Breast epithelium (tissue), 4 donors: ENCODE measurements at regions of chr1 and their contacts with region 1.

Region 1: DNA sequence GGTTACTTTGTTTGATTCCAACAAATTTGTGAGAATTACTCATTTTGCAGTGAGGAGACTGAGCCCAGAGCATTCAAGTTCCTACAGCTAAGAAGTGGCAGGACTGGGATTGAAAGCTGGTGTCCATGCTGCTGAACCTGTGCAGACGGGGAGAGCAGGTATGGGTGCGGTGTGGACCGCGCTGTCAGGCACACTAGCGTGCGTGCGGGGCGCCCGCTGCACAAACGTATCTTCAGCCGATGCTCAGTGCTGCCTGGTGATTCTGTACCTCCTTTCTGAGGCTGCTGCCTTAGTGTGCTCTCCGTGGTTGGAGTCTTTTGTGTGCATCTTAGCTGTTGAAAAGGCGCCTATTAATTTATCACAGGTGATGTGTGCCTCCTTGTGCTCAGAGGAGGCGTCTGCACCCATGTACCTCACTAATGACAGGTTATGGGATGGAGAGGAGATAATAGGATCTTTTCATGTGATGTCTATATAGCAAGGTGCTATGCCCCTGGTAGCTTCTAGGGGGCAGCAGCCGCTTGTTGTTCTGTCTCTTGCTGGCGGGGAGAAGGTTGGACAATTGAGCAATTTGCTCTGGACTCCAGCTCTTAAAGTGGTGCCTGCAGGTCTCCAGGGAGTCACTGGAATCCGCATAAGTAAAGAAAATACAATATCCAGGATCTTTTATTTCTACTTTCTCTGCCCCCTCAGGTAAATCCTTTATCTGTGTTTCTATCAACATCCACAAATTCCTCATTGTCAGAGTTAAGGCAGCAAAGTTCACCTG is 32.5 kb downstream of the PEX14 start:
- DNase-seq: peak in 1 of 2 donors; percentile 63
- H3K4me3 ChIP-seq: no peak overlapping the region
- H3K27ac ChIP-seq: no peak overlapping the region
- H3K4me1 ChIP-seq: peaks cover 0 to 8% of the 10 kb centered on the region in 2 donors
- H3K27me3 ChIP-seq: no peaks in the 10 kb centered on the region
- CTCF ChIP-seq: peak; percentile 39 to 85 (median 82)
- POLR2A ChIP-seq: no peak

Region 2: DNA sequence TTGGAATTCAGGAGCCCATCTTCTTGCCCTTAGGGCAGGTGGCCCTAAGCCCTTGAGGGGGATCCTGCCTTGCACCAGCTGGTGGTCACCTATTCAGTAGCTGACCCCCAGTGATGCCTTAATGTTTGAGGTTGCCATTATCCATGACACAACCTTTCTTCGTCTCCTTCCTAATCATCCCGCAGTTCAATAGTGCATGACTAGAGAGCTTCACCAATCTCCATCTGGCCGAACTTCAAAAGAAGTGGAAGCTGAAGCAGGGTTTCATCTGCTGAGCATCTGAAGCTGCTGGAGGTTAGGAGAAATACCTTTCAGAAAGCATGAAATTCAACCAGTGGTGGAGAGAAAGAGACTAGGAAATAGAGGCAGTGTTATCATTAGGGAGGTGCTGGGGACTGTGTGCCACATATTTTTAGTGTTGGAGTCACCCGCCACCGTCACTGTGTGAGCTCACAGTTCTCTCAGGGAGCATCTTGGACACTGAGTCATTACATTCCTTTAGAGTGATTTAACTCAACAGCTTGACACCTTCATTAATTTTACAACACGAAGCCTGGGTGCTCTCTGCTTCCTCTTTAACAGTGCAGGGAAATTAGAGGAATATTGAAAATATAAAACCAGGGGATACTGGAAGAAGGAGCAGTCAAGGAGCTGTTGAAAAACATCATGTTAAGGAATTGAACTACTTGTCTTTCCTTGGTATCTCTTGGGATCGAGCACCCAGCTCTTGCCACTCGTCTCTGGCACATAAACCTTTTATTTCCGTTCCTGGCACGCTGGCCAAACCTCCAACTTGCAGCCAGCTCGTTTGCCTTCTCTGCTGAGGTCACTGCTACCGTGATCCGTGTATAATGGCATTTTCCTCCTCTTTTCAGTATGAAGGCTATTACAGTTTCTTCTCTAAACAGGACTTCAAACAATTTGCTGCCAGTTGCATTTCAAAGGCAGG is 21.0 kb after region 1 on chr1:
- intact Hi-C with region 1: loop called (anchors 1 kb)
- DNase-seq: peak in 1 of 2 donors; percentile 70
- H3K4me3 ChIP-seq: no peak overlapping the region
- H3K27ac ChIP-seq: peak overlapping the region; percentile 56 to 78
- H3K4me1 ChIP-seq: peaks cover 0 to 8% of the 10 kb centered on the region in 2 donors
- H3K27me3 ChIP-seq: no peaks in the 10 kb centered on the region
- CTCF ChIP-seq: no peak
- POLR2A ChIP-seq: no peak

Region 3: GRCh38 chr1:10555614-10556429 is 48.5 kb after region 1 on chr1:
- intact Hi-C with region 1: no loop called
- DNase-seq: peak in 1 of 2 donors; percentile 48
- H3K4me3 ChIP-seq: no peak overlapping the region
- H3K27ac ChIP-seq: peak overlapping the region; percentile 68 to 88
- H3K4me1 ChIP-seq: no peaks in the 10 kb centered on the region
- H3K27me3 ChIP-seq: no peaks in the 10 kb centered on the region
- CTCF ChIP-seq: no peak
- POLR2A ChIP-seq: no peak